Right lobe of liver (tissue), 6 donors: ENCODE measurements at regions of chr19 and their contacts with region 1.

Region 1: GRCh38 chr19:12564016-12564664 is 12.9 kb upstream of the ZNF564 start:
- DNase-seq: peak; percentile 84 to 87 (median 86)
- ATAC-seq: peak; percentile 99 to 100 (median 100)
- H3K4me3 ChIP-seq: no peak overlapping the region
- H3K27ac ChIP-seq: no peak overlapping the region
- H3K4me1 ChIP-seq: no peaks in the 10 kb centered on the region
- H3K27me3 ChIP-seq: no peaks in the 10 kb centered on the region
- CTCF ChIP-seq: peak; percentile 92 to 98 (median 93)
- POLR2A ChIP-seq: no peak

Region 2: DNA sequence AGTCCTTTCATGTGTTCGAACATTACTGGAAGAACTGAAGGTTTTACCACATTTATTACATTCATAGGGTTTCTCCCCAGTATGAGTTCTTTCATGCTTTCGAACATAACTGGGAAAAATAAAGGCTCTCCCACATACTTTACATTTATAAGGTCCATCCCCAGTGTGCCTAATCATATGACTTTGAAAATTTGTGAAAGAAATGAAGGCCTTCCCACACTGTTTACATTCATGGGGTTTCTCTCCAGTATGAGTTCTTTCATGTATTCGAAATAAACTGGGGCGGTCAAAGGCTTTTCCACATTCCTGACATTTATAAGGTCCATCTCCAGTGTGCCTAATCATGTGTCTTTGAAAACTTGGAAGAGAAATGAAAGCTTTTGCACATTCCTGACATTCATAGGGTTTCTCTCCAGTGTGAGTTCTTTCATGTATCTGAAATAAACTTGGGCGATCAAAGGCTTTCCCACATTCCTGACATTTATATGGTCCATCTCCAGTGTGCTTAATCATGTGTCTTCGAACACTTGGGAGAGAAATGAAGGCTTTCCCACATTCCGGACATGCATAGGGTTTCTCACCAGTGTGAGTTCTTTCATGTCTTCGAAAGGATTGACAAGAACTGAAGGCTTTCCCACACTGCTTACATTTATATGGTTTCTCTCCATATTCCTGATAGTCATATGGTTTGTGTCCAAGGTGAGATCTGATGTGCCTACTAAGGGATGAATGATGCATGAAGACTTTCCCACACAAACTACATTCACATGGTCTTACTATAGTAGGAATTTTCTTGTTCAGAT is 36.9 kb before region 1 on chr19:
- intact Hi-C with region 1: no loop called
- DNase-seq: no peak
- ATAC-seq: no peak
- H3K4me3 ChIP-seq: no peak overlapping the region
- H3K27ac ChIP-seq: no peak overlapping the region
- H3K4me1 ChIP-seq: no peaks in the 10 kb centered on the region
- H3K27me3 ChIP-seq: no peaks in the 10 kb centered on the region
- CTCF ChIP-seq: no peak
- POLR2A ChIP-seq: no peak

Region 3: DNA sequence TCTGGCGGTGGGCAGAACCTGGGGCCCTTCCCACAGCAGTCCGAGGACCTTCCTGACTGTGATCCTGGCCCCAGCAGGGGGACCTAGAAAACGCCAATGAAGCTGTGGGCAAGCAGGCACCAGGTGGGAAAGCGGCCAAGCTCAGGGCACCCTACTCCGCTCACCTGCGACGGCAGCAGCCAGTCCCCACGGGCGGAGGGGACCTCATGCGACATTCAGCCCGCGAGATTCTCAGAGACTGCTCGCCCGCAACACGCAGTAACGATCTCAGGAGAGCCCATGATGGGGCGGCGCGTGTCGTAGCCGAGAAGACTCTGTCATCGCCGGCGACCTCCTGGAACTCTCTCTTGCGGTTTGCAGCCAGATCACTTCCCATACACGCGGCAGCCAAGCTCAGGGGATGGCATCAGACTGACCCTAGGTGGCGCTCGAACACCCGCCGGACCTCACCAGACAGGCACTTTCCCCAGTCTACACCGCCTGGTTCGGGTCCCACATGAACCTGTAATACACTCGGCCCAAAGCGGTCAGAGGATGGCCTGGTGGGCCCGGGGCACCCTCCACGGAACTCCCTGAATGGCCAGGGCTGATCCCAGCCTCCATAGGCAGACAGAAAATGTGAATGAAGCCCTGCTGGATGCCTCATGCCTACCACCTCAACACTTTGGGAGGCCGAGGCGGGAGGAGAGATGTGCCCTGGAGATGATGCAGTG is 75.9 kb after region 1 on chr19:
- intact Hi-C with region 1: no loop called
- DNase-seq: peak; percentile 76 to 87 (median 84)
- ATAC-seq: peak; percentile 91 to 98 (median 96)
- H3K4me3 ChIP-seq: peak overlapping the region in 1 of 3 donors; percentile 20
- H3K27ac ChIP-seq: no peak overlapping the region
- H3K4me1 ChIP-seq: peaks cover 0 to 6% (median 0%) of the 10 kb centered on the region in 4 donors
- H3K27me3 ChIP-seq: no peaks in the 10 kb centered on the region
- CTCF ChIP-seq: peak; percentile 51 to 77 (median 75)
- POLR2A ChIP-seq: no peak

Region 4: DNA sequence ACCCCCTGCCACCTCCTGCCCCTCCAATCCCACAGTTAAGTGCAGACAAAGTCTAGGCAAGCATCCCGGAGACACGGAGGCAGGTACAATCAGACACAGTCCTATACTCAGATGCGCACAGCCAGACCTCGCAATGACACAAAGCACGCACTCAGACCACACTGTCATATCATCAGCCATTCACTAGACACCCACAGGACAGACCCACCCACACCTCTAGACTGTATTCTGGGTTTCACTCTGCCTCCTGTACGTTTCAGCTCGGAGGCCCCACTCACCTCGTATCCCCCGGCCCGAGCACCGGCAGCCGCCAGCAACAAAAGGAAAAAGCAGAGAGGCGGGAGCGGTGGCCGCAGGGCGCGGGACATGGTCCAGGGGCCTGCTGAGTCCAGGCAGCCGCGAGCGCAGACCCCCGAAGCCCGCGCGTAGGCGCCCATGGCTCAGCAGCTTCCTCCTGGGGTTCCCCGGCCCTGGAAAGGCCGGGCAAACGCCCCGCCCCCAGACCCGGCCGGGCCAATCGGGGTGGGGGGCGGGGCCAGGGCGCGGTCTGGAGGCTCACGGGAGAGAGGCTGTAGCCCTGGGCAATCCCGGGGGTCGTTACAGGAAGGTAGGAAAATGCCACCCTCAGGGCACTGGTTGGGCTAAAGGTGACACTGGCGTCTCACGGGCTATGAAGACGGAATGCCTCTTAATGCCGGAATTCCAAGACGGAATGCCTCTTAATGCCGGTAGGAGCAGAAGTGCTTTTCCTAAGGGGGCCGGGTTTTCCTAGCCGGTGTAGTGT is 102.3 kb after region 1 on chr19 and contains the starts of genes MAN2B1 and WDR83:
- intact Hi-C with region 1: loop called (anchors 5 to 10 kb)
- DNase-seq: peak; percentile 80 to 81 (median 80)
- ATAC-seq: peak; percentile 79 to 86 (median 82)
- H3K4me3 ChIP-seq: peak within 1 kb of the TSS; percentile 68 to 93 (median 83)
- H3K27ac ChIP-seq: peak within 1 kb of the TSS; percentile 12 to 81 (median 65)
- H3K4me1 ChIP-seq: peaks cover 0 to 28% (median 12%) of the 10 kb centered on the region in 4 donors
- H3K27me3 ChIP-seq: no peaks in the 10 kb centered on the region
- CTCF ChIP-seq: no peak
- POLR2A ChIP-seq: peak; percentile 30
- total RNA-seq, gene MAN2B1: 32.7 to 76.5 (median 53.6) TPM
- total RNA-seq, gene WDR83: 2.5 to 6.2 (median 4.2) TPM

Region 5: DNA sequence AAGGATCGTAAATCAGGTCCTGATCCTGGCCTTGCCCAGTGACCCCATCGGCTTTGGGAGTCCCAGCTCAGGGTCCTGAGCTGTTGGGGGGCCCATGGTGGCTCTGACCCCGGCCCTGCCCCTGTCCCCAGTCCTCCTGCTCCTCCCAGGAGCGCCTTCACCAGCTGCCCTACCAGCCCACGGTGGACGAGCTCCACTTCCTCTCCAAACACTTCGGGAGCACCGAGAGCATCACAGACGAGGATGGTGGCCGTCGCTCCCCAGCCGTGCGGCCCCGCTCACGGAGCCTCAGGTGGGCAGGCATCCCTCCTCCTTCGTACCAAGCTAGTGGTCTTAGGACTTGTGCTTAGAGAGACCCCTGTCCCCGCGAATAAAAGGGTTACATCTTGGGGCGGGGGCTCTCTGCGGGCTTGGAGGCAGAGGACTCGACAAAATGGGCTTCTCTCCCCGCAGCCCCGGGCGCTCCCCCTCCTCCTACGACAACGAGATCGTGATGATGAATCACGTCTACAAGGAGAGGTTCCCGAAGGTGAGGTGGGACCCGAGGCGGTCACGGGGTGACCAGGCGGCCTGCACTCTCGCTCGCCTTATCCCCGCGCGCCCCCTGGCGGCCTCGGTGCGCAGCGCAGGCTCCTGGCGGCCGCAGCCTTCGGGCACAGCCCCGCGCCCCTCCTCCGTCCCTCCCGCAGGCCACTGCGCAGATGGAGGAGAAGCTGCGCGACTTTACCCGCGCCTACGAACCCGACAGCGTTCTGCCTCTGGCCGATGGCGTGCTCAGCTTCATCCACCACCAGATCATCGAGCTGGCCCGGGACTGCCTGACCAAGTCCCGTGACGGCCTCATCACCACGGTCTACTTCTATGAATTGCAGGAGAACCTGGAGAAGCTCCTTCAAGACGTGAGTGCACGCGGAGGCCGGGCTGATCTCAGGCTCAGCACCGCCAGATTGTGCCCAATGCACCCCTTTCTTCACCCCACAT is 283.3 kb after region 1 on chr19:
- intact Hi-C with region 1: loop called in 1 of 2 experiments (anchors 10 kb)
- DNase-seq: peak; percentile 83 to 85 (median 84)
- ATAC-seq: peak; percentile 97 to 100 (median 99)
- H3K4me3 ChIP-seq: no peak overlapping the region
- H3K27ac ChIP-seq: no peak overlapping the region
- H3K4me1 ChIP-seq: peaks cover 0 to 7% (median 0%) of the 10 kb centered on the region in 4 donors
- H3K27me3 ChIP-seq: no peaks in the 10 kb centered on the region
- CTCF ChIP-seq: peak; percentile 97 to 100 (median 99)
- POLR2A ChIP-seq: no peak

Region 6: GRCh38 chr19:12965017-12965811 is 401.1 kb after region 1 on chr19:
- intact Hi-C with region 1: no loop called
- DNase-seq: peak; percentile 79 to 83 (median 80)
- ATAC-seq: peak; percentile 97 to 98 (median 98)
- H3K4me3 ChIP-seq: peak overlapping the region; percentile 45 to 57 (median 46)
- H3K27ac ChIP-seq: no peak overlapping the region
- H3K4me1 ChIP-seq: peaks cover 0 to 5% (median 0%) of the 10 kb centered on the region in 4 donors
- H3K27me3 ChIP-seq: no peaks in the 10 kb centered on the region
- CTCF ChIP-seq: peak; percentile 86 to 92 (median 90)
- POLR2A ChIP-seq: no peak